Left cardiac atrium (tissue), 4 donors: ENCODE measurements at regions of chr10 and their contacts with region 1.

Region 1: DNA sequence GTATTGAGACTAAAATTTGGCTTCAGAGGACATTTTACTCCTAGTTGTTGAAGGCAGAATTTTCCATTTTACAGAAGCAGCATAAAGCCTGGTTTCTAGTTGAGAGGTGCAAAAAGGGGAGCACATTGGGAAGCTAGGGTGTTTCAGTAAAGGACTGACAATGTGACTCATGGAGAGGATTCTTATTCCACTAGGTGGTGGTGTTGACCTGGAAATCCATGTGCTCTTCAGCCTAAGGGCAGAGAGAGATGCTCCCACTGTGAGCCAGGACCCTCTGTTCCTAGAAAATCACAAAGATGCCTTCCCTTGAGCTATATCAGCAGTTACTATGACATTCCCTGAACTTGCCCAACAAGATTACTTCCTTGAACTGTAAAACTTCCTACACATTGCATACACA is 687.8 kb downstream of the IPMK start:
- DNase-seq: no peak
- ATAC-seq: no peak

Region 2: DNA sequence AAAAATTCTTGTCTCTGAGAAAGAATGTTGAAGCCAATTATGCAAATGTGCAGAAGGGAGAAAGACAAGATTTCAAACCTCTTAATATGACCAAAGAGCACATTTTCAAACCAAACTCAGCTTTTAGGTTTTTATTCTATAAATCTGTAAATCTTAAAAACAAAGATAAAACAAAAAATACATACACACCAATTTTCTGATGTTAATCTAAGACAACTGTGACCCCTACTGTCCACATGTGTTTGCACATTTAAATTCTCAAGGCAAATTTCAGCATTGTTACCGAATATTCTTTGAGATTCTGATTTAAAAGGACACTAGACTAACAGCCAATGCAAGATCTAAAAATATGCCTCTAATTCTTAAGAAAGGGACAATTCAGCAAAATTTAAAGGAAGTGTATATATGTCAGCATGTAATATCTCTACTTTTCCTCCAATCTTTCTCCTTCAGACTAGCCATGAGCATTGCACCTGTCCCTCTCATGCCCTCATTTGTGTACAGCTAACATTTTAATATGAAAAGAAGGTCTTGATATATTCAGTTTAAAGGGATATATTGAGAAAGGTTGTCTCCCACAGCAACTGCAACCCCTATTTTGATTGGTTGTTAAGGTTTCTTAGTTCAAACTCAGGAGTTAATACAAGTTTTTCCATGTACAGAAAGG is 269.9 kb after region 1 on chr10:
- intact Hi-C with region 1: loop called in 1 of 2 experiments (anchors 10 kb)
- DNase-seq: no peak
- ATAC-seq: no peak

Region 3: DNA sequence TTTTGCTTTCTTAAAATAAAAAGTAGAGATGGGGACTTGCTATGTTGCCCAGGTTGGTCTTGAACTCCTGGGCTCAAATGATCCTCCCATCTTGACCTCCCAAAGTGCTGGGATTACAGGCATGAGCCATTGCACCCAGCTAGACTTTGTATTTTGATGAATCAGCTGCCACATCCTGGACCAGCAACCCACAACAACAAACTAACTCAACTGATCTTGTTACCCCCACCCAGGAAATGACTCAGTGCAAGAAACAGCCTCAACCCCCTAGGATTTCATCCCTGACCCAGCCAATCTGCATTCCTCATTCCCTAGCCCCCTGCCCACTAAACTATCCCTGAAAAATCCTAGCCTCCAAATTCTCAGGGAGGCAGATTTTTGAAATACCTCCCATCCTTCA is 564.0 kb after region 1 on chr10:
- intact Hi-C with region 1: loop called in 1 of 2 experiments (anchors 10 kb)
- DNase-seq: no peak
- ATAC-seq: no peak